Activated B cell treated with CpG ODN at 0.5 μM for 24 hours (primary cell): ENCODE measurements at regions of chr18 and their contacts with region 1.

Region 1: DNA sequence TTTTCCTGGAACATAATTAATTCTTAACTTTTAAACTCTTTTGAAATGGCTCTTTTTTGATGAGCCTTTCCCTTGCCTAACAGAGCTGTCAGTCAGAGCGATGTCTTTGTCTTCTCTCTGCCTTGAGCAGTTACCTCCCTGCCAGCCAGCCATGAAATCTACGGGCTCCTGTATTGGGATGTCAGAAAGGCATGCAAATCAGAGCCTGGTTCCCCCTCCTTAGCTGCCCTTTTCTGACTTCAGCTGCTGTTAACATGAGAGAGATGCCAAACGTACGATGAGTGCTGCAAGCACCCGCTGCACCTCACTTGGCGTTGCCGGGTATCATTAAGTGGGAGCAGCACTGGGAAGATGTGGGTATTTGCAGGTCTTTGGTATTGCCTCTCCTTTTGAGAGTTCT is 131.4 kb upstream of the BOD1L2 start:
- DNase-seq: no peak
- ATAC-seq: no peak
- H3K4me3 Mint-ChIP-seq: no peak overlapping the region
- H3K27ac Mint-ChIP-seq: no peak overlapping the region
- H3K4me1 Mint-ChIP-seq: peaks cover 35% of the 10 kb centered on the region
- H3K27me3 Mint-ChIP-seq: no peaks in the 10 kb centered on the region
- CTCF ChIP-seq: no peak

Region 2: DNA sequence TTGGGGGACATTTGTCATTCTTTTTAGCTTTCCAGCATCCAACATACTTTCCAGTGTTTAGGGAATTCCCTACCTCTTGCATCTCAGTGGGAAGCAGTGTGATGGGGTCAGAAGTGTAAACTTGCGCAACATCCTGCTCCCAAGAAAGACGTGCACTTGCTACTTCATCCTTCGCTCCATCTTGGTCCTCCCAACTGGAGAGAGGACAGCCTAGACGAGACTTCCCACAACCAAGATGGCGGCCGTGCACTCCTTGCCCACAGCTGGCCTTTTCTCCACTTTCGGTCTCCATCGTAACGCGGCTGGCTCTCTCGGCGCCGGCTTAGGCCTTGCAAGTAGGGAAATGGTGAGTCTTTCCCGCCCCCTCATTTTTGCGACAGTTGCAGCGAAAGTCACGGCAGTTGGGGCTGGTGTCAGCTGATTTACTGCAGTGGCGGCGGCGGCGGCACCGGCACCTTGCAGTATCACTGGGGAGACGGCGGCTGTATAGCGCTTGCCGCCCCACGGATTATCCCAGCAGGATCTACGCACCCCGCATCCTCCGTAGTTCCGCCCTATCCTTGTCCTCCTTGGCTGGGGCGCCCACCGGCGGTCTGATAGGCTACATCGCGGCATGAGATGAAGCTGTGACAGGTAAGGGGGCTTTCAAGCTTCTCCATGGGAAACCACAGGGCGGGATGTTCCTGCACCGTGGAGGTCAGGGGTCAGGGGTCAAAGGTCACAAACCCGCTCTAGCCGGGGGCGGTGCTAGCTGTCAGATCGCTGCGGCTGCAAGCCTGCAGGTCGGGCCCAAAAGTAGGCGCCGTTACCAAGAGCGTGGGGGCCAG is 364.3 kb before region 1 on chr18 and contains the start of gene WDR7:
- CTCF ChIA-PET with region 1: no interaction called
- POLR2A ChIA-PET with region 1: no interaction called
- intact Hi-C with region 1: loop called (anchors 10 kb)
- DNase-seq: peak; percentile 81
- ATAC-seq: peak; percentile 93
- H3K4me3 Mint-ChIP-seq: peak within 1 kb of the TSS; percentile 92
- H3K27ac Mint-ChIP-seq: peak within 1 kb of the TSS; percentile 92
- H3K4me1 Mint-ChIP-seq: peaks cover 36% of the 10 kb centered on the region
- H3K27me3 Mint-ChIP-seq: no peaks in the 10 kb centered on the region
- CTCF ChIP-seq: no peak
- total RNA-seq, gene WDR7: 26.0 and 33.4 TPM in 2 replicates

Region 3: GRCh38 chr18:57077786-57078552 is 62.5 kb after region 1 on chr18:
- CTCF ChIA-PET with region 1: no interaction called
- POLR2A ChIA-PET with region 1: no interaction called
- intact Hi-C with region 1: loop called (anchors 5 kb)
- DNase-seq: peak; percentile 46
- ATAC-seq: peak; percentile 92
- H3K4me3 Mint-ChIP-seq: no peak overlapping the region
- H3K27ac Mint-ChIP-seq: no peak overlapping the region
- H3K4me1 Mint-ChIP-seq: peaks cover 25% of the 10 kb centered on the region
- H3K27me3 Mint-ChIP-seq: peaks cover 68% of the 10 kb centered on the region
- CTCF ChIP-seq: no peak

Region 4: DNA sequence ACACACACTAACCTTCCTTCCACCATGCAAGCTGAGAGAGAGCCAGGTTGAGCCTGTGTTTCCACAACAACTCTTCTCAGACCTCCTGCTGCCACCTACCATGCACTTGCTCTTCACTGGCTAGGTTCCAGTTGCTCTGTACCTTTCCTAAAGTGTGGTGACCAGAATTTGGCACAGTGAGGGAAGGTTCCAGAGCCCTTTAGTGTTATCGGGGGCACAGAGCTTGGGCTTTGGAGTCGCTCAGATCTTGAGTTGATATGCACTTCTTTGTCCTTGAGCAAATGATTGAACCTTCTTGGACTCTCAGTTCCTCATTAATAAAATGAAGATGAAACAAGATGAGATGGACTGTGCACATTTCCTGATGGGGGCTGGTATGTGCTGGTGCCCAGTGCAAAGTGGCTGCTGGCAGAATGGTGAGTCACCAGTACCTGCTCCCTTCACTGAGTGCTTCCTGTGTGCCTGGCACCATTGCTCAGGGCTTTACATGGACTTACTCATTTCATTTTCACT is 1075.7 kb after region 1 on chr18:
- CTCF ChIA-PET with region 1: no interaction called
- POLR2A ChIA-PET with region 1: no interaction called
- intact Hi-C with region 1: no loop called
- DNase-seq: peak; percentile 22
- ATAC-seq: peak; percentile 99
- H3K4me3 Mint-ChIP-seq: peak overlapping the region; percentile 21
- H3K27ac Mint-ChIP-seq: peak overlapping the region; percentile 87
- H3K4me1 Mint-ChIP-seq: peaks cover 21% of the 10 kb centered on the region
- H3K27me3 Mint-ChIP-seq: no peaks in the 10 kb centered on the region
- CTCF ChIP-seq: no peak